Heart left ventricle (tissue), 16 donors: ENCODE measurements at regions of chr16 and their contacts with region 1.

Region 1: GRCh38 chr16:54503011-54503855 is 216.6 kb upstream of the IRX3 start:
- DNase-seq: peak; percentile 69 to 92 (median 76)
- ATAC-seq: peak; percentile 91 to 96 (median 94)
- H3K4me3 ChIP-seq: no peak overlapping the region
- H3K27ac ChIP-seq: peak overlapping the region in 8 of 12 donors; percentile 54 to 87 (median 70)
- H3K4me1 ChIP-seq: peaks cover 0 to 65% (median 31%) of the 10 kb centered on the region in 12 donors
- H3K27me3 ChIP-seq: no peaks in the 10 kb centered on the region
- CTCF ChIP-seq: no peak
- POLR2A ChIP-seq: no peak

Region 2: GRCh38 chr16:54407596-54407995 is 95.6 kb before region 1 on chr16:
- intact Hi-C with region 1: loop called in 1 of 10 experiments (anchors 5 kb)
- DNase-seq: no peak
- ATAC-seq: no peak
- H3K4me3 ChIP-seq: no peak overlapping the region
- H3K27ac ChIP-seq: no peak overlapping the region
- H3K4me1 ChIP-seq: peaks cover 0 to 21% (median 11%) of the 10 kb centered on the region in 12 donors
- H3K27me3 ChIP-seq: peaks cover 0 to 3% (median 0%) of the 10 kb centered on the region in 9 donors
- CTCF ChIP-seq: no peak
- POLR2A ChIP-seq: no peak

Region 3: GRCh38 chr16:54422569-54422978 is 80.7 kb before region 1 on chr16:
- intact Hi-C with region 1: loop called in 1 of 10 experiments (anchors 5 kb)
- DNase-seq: no peak
- ATAC-seq: peak; percentile 29 to 49 (median 38)
- H3K4me3 ChIP-seq: no peak overlapping the region
- H3K27ac ChIP-seq: peak overlapping the region in 11 of 12 donors; percentile 41 to 82 (median 79)
- H3K4me1 ChIP-seq: peaks cover 0 to 26% (median 12%) of the 10 kb centered on the region in 12 donors
- H3K27me3 ChIP-seq: no peaks in the 10 kb centered on the region
- CTCF ChIP-seq: no peak
- POLR2A ChIP-seq: no peak

Region 4: DNA sequence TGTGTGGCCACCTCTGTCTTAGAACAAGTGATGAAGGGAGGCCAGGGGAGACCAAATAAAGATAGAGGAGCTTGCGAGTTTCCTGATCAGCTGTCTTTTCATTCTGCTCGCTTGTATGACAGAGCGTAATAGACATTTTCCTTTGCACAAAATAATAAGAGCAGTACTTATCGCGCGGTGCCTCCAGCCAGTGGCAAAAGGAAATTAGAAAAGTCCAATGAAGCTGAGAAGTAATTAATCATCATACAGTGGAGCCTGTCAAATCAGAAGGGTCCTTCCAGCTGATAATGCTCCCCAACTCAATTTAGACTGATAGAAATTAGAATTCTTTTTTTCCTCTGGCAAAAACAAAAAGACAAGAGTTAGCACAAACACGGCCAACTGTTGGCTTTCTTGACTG is 120.4 kb after region 1 on chr16:
- intact Hi-C with region 1: no loop called
- DNase-seq: no peak
- ATAC-seq: no peak
- H3K4me3 ChIP-seq: no peak overlapping the region
- H3K27ac ChIP-seq: no peak overlapping the region
- H3K4me1 ChIP-seq: peaks cover 0 to 4% (median 0%) of the 10 kb centered on the region in 12 donors
- H3K27me3 ChIP-seq: no peaks in the 10 kb centered on the region
- CTCF ChIP-seq: no peak
- POLR2A ChIP-seq: no peak

Region 5: GRCh38 chr16:54633943-54634362 is 130.7 kb after region 1 on chr16:
- intact Hi-C with region 1: loop called in 1 of 10 experiments (anchors 10 kb)
- DNase-seq: peak in 2 of 5 donors; percentile 29 to 38
- ATAC-seq: peak in 2 of 4 donors; percentile 33 to 62
- H3K4me3 ChIP-seq: no peak overlapping the region
- H3K27ac ChIP-seq: no peak overlapping the region
- H3K4me1 ChIP-seq: peaks cover 0 to 4% (median 0%) of the 10 kb centered on the region in 12 donors
- H3K27me3 ChIP-seq: no peaks in the 10 kb centered on the region
- CTCF ChIP-seq: peak in 11 of 12 donors; percentile 25 to 65 (median 46)
- POLR2A ChIP-seq: no peak

Region 6: GRCh38 chr16:54657058-54657708 is 153.9 kb after region 1 on chr16:
- intact Hi-C with region 1: loop called in 1 of 10 experiments (anchors 10 kb)
- DNase-seq: peak in 1 of 5 donors; percentile 22
- ATAC-seq: peak in 2 of 4 donors; percentile 79 to 84
- H3K4me3 ChIP-seq: no peak overlapping the region
- H3K27ac ChIP-seq: no peak overlapping the region
- H3K4me1 ChIP-seq: peaks cover 0 to 35% (median 14%) of the 10 kb centered on the region in 12 donors
- H3K27me3 ChIP-seq: no peaks in the 10 kb centered on the region
- CTCF ChIP-seq: no peak
- POLR2A ChIP-seq: no peak

Region 7: GRCh38 chr16:54812229-54812628 is 309.0 kb after region 1 on chr16:
- intact Hi-C with region 1: loop called in 1 of 10 experiments (anchors 5 kb)
- DNase-seq: no peak
- ATAC-seq: peak in 1 of 4 donors; percentile 63
- H3K4me3 ChIP-seq: no peak overlapping the region
- H3K27ac ChIP-seq: no peak overlapping the region
- H3K4me1 ChIP-seq: peaks cover 0 to 6% (median 0%) of the 10 kb centered on the region in 12 donors
- H3K27me3 ChIP-seq: no peaks in the 10 kb centered on the region
- CTCF ChIP-seq: peak in 10 of 12 donors; percentile 8 to 56 (median 26)
- POLR2A ChIP-seq: no peak

Region 8: DNA sequence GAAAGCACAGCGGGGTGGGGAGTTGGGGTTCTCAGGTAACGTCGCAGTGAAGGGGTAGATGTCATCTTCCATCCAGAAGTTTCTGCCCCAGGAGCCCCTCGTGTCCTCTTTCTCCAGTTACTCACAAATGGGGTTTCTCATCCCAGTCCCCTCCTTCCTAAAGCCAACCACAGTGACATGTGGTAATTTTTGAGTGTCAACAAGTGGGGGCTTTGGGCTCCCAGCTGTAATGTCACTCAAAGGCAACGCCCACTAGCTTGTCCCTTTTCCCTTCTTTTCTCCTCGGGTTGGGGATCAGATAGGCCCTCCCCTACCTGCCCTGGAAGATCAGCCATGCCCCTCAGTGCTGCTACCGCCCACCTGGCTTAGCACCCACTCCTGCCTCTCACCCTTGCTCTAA is 441.8 kb after region 1 on chr16:
- intact Hi-C with region 1: no loop called
- DNase-seq: no peak
- ATAC-seq: no peak
- H3K4me3 ChIP-seq: no peak overlapping the region
- H3K27ac ChIP-seq: no peak overlapping the region
- H3K4me1 ChIP-seq: peaks cover 0 to 16% (median 0%) of the 10 kb centered on the region in 12 donors
- H3K27me3 ChIP-seq: peaks cover 0 to 42% (median 7%) of the 10 kb centered on the region in 9 donors
- CTCF ChIP-seq: no peak
- POLR2A ChIP-seq: no peak